Endothelial cell of umbilical vein (primary cell): ENCODE measurements at regions of chr14 and their contacts with region 1.

Region 1: DNA sequence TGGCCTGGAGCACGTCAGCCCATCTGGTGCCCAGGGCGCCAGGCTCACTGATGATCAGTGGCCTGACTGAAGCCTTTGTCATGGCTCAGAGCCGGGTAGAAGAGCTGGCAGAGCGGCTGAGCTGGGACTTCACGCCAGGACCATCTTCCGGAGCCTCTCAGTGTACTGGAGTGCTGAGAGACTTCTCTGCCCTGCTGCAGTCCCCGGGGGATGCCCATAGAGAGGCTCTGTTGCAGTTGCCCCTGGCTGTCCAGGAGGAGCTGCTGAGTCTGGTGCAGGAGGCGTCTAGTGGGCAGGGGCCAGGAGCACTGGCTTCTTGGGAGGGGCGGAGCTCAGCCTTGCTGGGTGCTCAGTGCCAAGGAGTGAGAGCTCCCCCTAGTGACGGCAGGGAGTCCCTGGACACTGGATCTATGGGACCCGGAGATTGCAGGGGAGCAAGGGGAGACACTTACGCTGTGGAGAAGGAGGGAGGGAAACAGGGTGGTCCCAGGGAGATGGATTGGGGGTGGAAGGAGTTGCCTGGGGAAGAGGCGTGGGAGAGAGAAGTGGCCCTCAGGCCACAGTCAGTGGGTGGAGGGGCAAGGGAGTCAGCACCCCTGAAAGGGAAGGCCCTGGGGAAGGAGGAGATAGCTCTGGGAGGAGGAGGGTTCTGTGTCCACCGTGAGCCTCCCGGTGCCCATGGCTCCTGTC is 2.0 kb downstream of the KHNYN start:
- DNase-seq: peak; percentile 92
- H3K4me3 ChIP-seq: peak overlapping the region in 2 of 3 experiments; percentile 78 to 89
- H3K27ac ChIP-seq: peak overlapping the region; percentile 94
- H3K4me1 ChIP-seq: peaks cover 46% of the 10 kb centered on the region
- H3K27me3 ChIP-seq: no peaks in the 10 kb centered on the region
- CTCF ChIP-seq: peak; percentile 95 to 97
- POLR2A ChIP-seq: no peak

Region 2: DNA sequence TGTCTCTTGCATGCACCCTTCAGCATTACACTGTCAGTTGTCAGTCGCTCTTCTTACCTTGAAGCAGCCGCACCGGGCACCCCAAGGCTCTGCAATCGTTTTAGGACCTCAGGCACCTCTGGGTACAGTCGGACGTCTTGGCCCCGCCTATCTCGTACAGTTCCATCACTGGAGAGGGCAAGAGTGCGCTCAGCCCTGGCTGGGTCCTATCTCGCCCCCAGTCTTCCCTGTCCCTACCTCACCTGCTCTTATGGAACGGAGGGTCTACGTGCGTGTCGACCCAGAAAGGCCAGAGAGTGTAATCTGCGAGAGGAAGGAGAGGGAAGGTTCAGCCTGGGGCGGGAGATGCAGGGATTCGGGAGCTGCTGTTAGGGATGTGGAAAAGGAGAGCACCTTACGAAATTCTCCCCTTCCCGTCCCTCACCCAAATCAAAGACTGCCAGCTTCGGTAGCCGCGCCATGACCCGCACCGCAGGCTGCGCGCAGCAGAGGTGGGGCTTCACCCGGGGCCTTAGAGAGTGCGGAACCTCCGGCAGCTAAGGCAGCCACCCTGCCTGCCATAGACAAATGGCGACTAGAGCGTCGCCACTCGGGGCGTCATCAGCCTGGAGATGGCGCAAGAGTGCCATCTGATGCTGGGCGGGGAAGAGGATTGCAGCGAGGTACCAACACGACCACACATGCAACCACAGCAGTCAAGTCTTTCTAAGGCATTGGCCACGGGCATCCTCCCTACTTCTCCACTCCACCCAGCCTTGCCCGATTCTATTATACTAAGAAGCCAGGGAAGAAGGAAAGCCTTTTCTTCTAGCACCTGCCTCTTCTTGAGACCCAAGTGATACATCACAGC is 216.0 kb before region 1 on chr14 and contains the start of gene MDP1:
- CTCF ChIA-PET with region 1: interaction called, 7 read pairs
- POLR2A ChIA-PET with region 1: no interaction called
- dilution Hi-C with region 1: no loop called
- intact Hi-C with region 1: loop called (anchors 1 kb)
- DNase-seq: peak; percentile 91
- H3K4me3 ChIP-seq: peak within 1 kb of the TSS; percentile 57 to 69 (median 64)
- H3K27ac ChIP-seq: peak within 1 kb of the TSS; percentile 61
- H3K4me1 ChIP-seq: peaks cover 11% of the 10 kb centered on the region
- H3K27me3 ChIP-seq: no peaks in the 10 kb centered on the region
- CTCF ChIP-seq: peak; percentile 84 to 86
- POLR2A ChIP-seq: peak; percentile 88
- total RNA-seq, gene MDP1: 8.1 and 9.9 TPM in 2 replicates

Region 3: DNA sequence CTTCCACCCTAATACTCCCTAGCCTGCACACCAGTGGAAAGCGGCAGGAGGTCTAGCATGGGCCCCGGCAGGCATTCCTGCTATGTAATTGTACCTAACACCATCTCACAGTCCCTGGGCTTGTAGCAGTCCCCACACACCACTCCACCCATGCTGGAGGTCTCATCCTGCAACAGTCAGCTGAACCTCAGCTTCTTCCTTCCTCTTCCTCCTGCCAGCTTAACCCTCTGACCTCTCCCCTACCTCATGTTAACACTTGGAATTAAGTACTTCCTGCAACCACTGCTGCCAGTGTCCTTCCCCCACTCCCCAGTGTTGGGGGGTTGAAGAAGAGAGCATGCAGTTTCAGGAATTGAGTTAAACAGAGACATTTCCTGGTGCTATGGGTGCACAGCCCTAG is 104.4 kb before region 1 on chr14:
- CTCF ChIA-PET with region 1: interaction called, 811 read pairs
- POLR2A ChIA-PET with region 1: interaction called, 32 read pairs
- dilution Hi-C with region 1: no loop called
- intact Hi-C with region 1: loop called (anchors 1 kb)
- DNase-seq: no peak
- H3K4me3 ChIP-seq: no peak overlapping the region
- H3K27ac ChIP-seq: no peak overlapping the region
- H3K4me1 ChIP-seq: peaks cover 6% of the 10 kb centered on the region
- H3K27me3 ChIP-seq: no peaks in the 10 kb centered on the region
- CTCF ChIP-seq: no peak
- POLR2A ChIP-seq: no peak

Region 4: DNA sequence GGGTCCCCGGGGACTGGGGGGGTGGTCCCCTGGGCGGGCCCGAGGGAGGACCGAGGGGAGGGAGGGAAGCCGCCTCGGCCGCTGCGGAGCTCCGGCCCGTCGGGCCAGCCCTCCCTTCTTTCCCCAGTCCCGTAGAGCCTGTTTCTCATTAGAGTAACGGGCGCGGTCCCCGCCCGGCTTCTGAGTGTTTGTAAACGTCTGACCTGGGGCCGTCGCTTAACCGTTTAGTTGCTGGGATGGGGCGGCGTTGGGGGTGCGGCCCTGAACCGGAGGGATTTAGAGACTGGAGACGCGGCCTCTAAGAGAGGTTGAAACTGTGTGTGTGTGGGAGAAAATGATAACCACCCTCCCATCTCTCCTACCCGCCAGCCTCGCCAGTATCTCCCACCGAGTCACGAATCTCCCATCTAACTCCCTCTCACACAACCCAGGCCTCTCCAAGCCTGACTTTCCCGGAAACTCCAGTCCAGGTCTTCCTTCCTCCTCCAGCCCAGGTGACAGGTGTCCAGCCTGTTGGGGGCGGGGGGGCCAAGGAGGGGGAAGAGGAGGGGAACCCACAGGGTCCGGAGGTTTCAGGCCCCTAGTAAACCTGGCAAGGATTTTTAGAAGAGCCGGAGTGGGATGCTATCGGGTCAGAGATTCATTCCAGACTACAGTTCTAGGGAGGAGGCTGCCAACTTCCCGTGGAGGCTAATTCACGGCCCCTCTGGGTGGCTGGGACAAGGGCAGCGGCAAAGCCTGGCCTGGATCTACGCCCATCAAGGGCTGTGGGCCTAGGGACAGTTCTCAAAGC is 64.8 kb before region 1 on chr14:
- CTCF ChIA-PET with region 1: interaction called, 254 read pairs
- POLR2A ChIA-PET with region 1: interaction called, 36 read pairs
- dilution Hi-C with region 1: no loop called
- intact Hi-C with region 1: loop called (anchors 1 kb)
- DNase-seq: peak; percentile 87
- H3K4me3 ChIP-seq: peak overlapping the region; percentile 24 to 54 (median 31)
- H3K27ac ChIP-seq: peak overlapping the region; percentile 90
- H3K4me1 ChIP-seq: peaks cover 27% of the 10 kb centered on the region
- H3K27me3 ChIP-seq: peaks cover 0 to 2% of the 10 kb centered on the region in 2 experiments
- CTCF ChIP-seq: no peak
- POLR2A ChIP-seq: peak; percentile 32

Region 5: GRCh38 chr14:24411443-24412389 is 20.0 kb before region 1 on chr14:
- CTCF ChIA-PET with region 1: interaction called, 50 read pairs
- POLR2A ChIA-PET with region 1: no interaction called
- dilution Hi-C with region 1: no loop called
- intact Hi-C with region 1: loop called (anchors 1 kb)
- DNase-seq: peak; percentile 70
- H3K4me3 ChIP-seq: no peak overlapping the region
- H3K27ac ChIP-seq: no peak overlapping the region
- H3K4me1 ChIP-seq: no peaks in the 10 kb centered on the region
- H3K27me3 ChIP-seq: no peaks in the 10 kb centered on the region
- CTCF ChIP-seq: peak; percentile 67 to 76
- POLR2A ChIP-seq: no peak